HCT116 (cell line): ENCODE measurements at regions of chrX and their contacts with region 1.

Region 1: DNA sequence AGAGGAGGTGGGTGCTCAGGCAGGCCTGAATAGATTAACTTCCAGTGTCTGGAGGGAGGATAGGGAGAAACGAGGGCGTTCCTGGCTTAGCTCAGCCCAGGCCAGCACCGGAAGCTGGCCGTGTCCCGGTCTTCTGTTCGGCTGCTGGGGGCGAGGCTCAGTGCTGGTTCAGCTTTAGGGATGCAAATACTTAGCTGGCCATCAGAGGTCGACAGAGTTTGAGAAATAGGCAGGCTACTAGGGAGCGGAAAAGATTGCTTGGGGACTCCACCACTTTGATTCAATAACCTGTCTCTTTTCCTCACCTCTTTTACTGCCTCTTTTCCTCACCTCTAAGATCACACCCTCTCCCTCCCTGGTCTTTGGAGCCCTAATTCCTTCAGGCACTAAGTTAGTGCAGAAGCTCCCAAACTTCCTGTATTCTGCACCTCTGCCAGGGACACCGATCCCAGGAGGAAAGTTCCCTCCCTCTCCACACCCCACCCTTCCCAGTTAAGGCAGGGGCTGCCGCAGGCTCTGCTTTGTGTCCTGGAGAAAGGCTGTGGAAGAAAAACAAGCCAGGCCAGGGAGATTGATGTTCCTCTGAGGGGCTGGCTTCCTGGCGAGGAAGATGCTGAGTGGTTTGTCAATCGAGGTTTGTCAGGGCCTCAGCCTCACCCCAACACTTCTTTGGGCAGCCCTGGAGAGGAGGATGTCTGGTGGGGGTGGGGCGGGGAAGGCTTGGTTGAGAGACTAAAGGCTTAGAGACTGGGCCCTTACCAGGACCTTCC is 6.0 kb upstream of the EFNB1 start:
- DNase-seq: peak; percentile 23
- ATAC-seq: peak; percentile 92
- H3K4me3 ChIP-seq: no peak overlapping the region
- H3K27ac ChIP-seq: no peak overlapping the region
- H3K4me1 ChIP-seq: peaks cover 0 to 9% of the 10 kb centered on the region in 2 experiments; a peak in 1 of 4 replicates
- H3K27me3 ChIP-seq: no peaks in the 10 kb centered on the region
- CTCF ChIP-seq: peak in 2 of 3 experiments; percentile 44 to 56; a peak in 4 of 6 replicates
- POLR2A ChIP-seq: no peak
- RAD21 ChIP-seq: no peak

Region 2: GRCh38 chrX:69285881-69286564 is 463.2 kb after region 1 on chrX:
- CTCF ChIA-PET with region 1: interaction called, 15 read pairs
- POLR2A ChIA-PET with region 1: interaction called, 10 read pairs
- RAD21 ChIA-PET with region 1: interaction called in 1 of 2 experiments, 7 read pairs
- intact Hi-C with region 1: loop called (anchors 1 kb)
- DNase-seq: peak; percentile 0
- ATAC-seq: peak; percentile 92
- H3K4me3 ChIP-seq: peak overlapping the region; percentile 13 to 16; a peak in 3 of 4 replicates
- H3K27ac ChIP-seq: no peak overlapping the region
- H3K4me1 ChIP-seq: no peaks in the 10 kb centered on the region; a peak in 1 of 4 replicates
- H3K27me3 ChIP-seq: no peaks in the 10 kb centered on the region
- CTCF ChIP-seq: peak; percentile 59 to 79 (median 74); a peak in 5 of 6 replicates
- POLR2A ChIP-seq: no peak
- RAD21 ChIP-seq: peak; percentile 85

Region 3: GRCh38 chrX:69387567-69388487 is 565.0 kb after region 1 on chrX:
- CTCF ChIA-PET with region 1: interaction called, 26 read pairs
- POLR2A ChIA-PET with region 1: interaction called, 21 read pairs
- RAD21 ChIA-PET with region 1: interaction called in 1 of 2 experiments, 6 read pairs
- intact Hi-C with region 1: loop called (anchors 1 kb)
- DNase-seq: peak; percentile 31
- ATAC-seq: peak; percentile 98
- H3K4me3 ChIP-seq: no peak overlapping the region
- H3K27ac ChIP-seq: no peak overlapping the region
- H3K4me1 ChIP-seq: peaks cover 0 to 3% of the 10 kb centered on the region in 2 experiments; a peak in 1 of 4 replicates
- H3K27me3 ChIP-seq: 0 out of 2 replicates have a peak, but pooled peaks cover 4% of the 10 kb centered on the region
- CTCF ChIP-seq: peak; percentile 62 to 76 (median 71)
- POLR2A ChIP-seq: no peak
- RAD21 ChIP-seq: peak; percentile 85